Mammary epithelial cell (primary cell): ENCODE measurements at regions of chr1 and their contacts with region 1.

Region 1: GRCh38 chr1:165288350-165289148 is 68.0 kb downstream of the LMX1A start:
- DNase-seq: no peak
- H3K4me3 ChIP-seq: no peak overlapping the region
- H3K27ac ChIP-seq: no peak overlapping the region
- H3K4me1 ChIP-seq: no peaks in the 10 kb centered on the region
- H3K27me3 ChIP-seq: peaks cover 2% of the 10 kb centered on the region
- CTCF ChIP-seq: no peak

Region 2: GRCh38 chr1:165248969-165249571 is 39.5 kb before region 1 on chr1:
- CTCF ChIA-PET with region 1: no interaction called
- dilution Hi-C with region 1: loop called (anchors 5 kb)
- in situ Hi-C with region 1: no loop called
- intact Hi-C with region 1: no loop called
- DNase-seq: no peak
- H3K4me3 ChIP-seq: no peak overlapping the region
- H3K27ac ChIP-seq: no peak overlapping the region
- H3K4me1 ChIP-seq: no peaks in the 10 kb centered on the region
- H3K27me3 ChIP-seq: peaks cover 4% of the 10 kb centered on the region
- CTCF ChIP-seq: no peak

Region 3: DNA sequence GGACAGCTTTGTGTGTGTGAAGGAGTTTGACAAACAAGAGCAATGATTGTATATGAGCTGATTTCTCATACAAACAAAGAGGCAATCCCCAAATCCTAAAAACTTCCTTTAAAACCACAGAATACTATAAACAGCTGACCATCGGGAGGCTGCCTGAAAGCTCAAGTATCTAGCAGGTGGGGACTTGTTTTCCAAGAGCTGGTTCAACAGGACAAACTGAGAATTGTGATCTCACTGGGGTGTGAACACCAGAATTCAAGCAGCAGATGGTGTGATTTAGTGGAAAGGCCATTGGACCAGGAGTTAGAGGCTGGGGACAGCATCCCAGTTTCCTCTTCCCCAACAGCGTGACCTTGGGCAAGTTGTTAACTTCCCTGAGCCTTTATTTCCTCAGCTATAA is 54.0 kb after region 1 on chr1:
- CTCF ChIA-PET with region 1: no interaction called
- dilution Hi-C with region 1: loop called (anchors 5 kb)
- in situ Hi-C with region 1: no loop called
- intact Hi-C with region 1: no loop called
- DNase-seq: peak; percentile 5
- H3K4me3 ChIP-seq: no peak overlapping the region
- H3K27ac ChIP-seq: no peak overlapping the region
- H3K4me1 ChIP-seq: no peaks in the 10 kb centered on the region
- H3K27me3 ChIP-seq: peaks cover 8% of the 10 kb centered on the region
- CTCF ChIP-seq: no peak

Region 4: GRCh38 chr1:165610885-165611284 is 322.3 kb after region 1 on chr1:
- CTCF ChIA-PET with region 1: no interaction called
- dilution Hi-C with region 1: no loop called
- in situ Hi-C with region 1: no loop called
- intact Hi-C with region 1: no loop called
- DNase-seq: no peak
- H3K4me3 ChIP-seq: no peak overlapping the region
- H3K27ac ChIP-seq: no peak overlapping the region
- H3K4me1 ChIP-seq: no peaks in the 10 kb centered on the region
- H3K27me3 ChIP-seq: no peaks in the 10 kb centered on the region
- CTCF ChIP-seq: no peak